BJ (cell line): ENCODE measurements at regions of chr5 and their contacts with region 1.

Region 1: DNA sequence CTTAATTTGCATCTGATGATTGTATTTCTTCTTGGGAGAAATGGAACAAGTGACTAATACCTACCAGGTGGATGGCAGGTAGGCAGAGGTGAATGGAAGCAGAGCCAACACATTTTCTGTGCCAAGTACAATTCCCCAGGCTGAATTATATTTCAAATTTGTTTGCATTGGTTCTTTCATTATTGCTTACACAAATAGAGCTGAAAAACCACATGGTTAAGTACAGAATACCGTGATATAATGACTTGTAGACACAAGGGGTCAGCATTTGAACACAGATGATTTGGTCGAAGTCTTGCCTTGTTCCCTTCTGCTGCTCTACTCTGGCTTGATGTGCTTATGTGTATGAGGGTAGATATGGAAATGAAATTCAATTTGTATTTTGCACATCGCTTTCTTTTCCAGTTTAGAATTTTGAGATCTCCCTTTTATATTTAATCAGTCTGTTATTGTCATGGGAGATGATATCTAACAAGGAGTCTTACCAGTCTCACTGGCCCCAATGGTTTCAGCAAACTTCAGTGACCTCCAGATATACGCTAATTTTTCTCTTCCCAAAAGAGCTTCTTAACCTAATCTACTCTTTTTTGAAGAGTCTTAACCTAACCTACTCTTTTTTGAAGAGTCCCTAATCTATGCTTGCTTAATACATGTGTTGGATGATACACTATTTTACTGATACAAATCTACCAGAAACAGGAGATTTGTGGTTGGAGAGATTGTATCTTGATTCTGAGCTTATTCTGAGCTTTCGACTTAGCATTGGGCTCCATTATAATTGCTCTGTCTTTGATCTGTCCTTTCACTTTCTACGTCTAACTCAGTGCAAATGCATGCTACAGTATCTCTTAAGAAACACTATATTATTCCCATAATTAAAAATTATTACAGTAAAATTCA is 88.1 kb downstream of the PCSK1 start:
- DNase-seq: no peak
- H3K4me3 ChIP-seq: no peak overlapping the region
- H3K27me3 ChIP-seq: no peaks in the 10 kb centered on the region
- CTCF ChIP-seq: peak; percentile 57

Region 2: DNA sequence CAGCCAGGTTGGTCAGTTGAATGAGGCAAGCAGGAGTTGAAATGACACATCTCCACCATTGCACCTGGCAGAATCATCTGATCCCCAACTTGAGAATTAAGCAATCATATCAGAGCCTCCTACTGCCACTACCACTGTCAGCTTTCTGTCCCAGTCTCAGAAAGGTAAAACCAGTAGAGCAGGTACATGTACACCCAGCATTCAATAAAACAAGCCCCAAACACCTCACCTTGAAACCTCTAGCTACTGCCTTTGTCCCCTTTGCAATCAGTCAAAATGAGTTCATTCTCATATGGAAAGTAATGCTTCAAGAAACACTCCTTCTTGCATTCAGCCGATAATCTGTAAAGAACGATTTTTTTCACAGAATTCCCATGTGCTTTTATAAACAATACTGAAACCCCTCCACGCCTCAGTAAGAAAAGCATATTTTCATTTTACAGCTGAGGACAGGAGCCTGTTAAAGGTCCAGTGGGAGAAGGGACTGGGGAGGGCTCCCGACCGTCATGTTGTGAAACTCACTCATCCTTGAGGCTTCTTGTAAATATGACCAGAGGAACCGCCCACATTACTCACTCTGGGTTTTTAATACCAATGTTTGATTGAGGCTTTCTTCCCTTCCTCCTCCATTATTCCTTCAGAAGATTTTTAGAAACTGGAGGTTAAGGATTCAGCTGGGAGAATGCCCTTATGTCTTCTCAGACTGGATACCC is 461.2 kb before region 1 on chr5:
- CTCF ChIA-PET with region 1: no interaction called
- POLR2A ChIA-PET with region 1: interaction called, 11 read pairs
- DNase-seq: no peak
- H3K4me3 ChIP-seq: no peak overlapping the region
- H3K27me3 ChIP-seq: no peaks in the 10 kb centered on the region
- CTCF ChIP-seq: no peak

Region 3: DNA sequence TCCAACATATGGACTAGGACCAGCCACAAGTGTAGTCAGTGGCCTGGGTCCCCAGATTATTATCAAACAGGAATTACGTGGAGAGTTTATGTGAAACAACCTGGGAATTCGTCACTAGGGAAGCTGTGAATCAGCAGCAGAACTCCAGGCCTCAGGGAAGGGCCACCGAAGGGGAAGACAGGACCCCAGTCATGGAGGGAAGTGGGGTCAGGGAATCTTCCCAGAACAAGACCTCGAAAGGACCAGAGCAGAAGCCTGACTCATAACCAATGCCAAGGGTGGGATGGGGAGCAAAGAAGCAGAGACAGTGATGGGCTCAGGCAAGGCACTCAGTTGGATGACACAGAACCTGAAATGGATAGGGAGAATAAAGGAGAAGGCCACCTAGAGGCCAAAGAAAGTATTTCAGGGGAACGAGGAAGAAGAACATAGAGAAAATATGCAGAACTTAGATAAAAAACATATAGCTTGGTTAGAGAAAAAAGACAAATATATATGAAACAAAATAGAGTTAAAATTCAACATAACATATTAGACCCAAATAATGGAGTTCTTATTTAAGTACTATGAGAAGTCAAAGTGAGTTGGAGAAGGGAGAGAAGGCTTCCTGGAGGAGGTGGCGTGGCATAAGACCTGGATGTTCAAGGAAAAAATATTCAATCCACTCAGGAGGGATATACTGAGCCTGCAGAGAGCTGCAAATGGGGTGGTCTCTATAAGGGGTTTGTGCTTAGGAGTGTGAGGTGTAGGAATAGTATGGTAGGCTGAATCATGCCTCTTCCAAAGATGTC is 250.6 kb after region 1 on chr5:
- CTCF ChIA-PET with region 1: interaction called, 94 read pairs
- POLR2A ChIA-PET with region 1: no interaction called
- DNase-seq: no peak
- H3K4me3 ChIP-seq: no peak overlapping the region
- H3K27me3 ChIP-seq: no peaks in the 10 kb centered on the region; the same call in 1 of the 2 replicates
- CTCF ChIP-seq: peak; percentile 28; the same call in 1 of the 2 replicates

Region 4: GRCh38 chr5:96601811-96602244 is 256.9 kb after region 1 on chr5:
- CTCF ChIA-PET with region 1: interaction called, 94 read pairs
- POLR2A ChIA-PET with region 1: no interaction called
- DNase-seq: no peak
- H3K4me3 ChIP-seq: no peak overlapping the region
- H3K27me3 ChIP-seq: no peaks in the 10 kb centered on the region; the same call in 1 of the 2 replicates
- CTCF ChIP-seq: peak; percentile 76